ENCODE measurements at regions of chr11 and their contacts with region 1.

Region 1: DNA sequence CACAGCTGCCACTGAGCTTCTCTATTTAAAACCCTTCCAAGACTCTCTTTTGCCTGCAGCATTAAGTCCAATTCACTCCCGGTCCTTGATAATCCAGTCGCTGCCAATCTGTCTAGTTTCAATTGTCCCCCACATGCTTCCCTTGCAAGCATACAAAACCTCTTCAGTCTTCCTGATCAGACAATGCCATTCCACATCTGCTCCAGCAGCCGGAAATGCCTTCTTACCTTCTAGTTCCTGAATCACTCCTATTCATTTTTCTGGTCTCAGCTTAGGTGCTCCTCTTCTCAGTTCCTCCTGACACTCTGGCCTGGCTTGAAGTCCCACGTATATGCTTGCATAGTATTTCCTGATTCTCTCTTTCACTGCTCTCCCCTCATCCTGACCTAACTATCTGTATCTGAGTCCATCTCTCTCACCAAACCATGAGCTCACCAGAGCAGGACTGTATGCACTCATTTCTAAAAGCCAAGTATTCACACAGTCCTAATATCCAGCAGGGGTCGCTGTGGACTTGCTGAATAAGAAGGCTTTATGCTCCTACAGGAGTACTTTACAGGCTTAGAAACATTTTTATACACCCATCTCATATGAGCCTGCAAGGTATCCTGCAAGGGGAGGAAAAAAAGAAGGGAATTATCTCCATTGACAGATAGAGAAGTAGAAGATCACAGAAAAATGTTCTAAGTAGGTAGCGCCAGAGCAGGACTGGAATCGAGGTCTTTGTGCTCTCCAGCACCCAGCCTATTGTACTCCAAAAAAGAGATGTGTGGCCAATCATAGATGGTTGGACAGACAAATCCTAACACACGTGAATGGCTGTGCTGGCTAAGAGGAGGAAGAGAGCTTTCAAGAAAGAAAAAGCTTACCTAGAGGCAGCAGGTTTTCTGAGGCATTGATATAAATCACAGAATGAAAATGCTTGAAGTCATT is 19.2 kb downstream of the XRRA1 start:
- DNase-seq: peak; percentile 80
- ATAC-seq: peak; percentile 74
- H3K4me3 Mint-ChIP-seq: no peak overlapping the region
- H3K27ac Mint-ChIP-seq: no peak overlapping the region
- H3K4me1 Mint-ChIP-seq: peaks cover 11% of the 10 kb centered on the region
- H3K27me3 Mint-ChIP-seq: no peaks in the 10 kb centered on the region

Region 2: DNA sequence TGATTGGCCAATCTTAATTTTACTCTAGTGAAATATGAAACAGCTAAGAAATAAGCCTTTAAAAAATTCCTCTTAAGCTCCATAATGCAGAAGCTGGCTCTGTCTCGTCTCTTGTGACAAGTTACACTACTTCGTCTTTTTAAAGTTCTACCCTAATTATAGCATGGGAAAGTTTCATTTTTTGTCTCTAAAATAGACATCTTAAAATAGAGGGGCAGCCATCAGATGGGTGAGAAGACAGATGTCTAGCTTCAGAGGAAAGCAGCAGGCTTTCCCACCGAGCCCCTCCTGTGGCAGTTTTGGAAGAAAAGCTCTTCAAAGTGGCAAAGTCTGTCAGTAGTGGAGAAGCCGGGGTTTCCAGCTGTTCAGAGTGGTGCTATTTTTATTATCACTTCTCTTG is 20.3 kb before region 1 on chr11:
- CTCF ChIA-PET with region 1: interaction called, 11 read pairs
- POLR2A ChIA-PET with region 1: no interaction called
- intact Hi-C with region 1: no loop called
- DNase-seq: no peak
- ATAC-seq: no peak
- H3K4me3 Mint-ChIP-seq: no peak overlapping the region
- H3K27ac Mint-ChIP-seq: no peak overlapping the region
- H3K4me1 Mint-ChIP-seq: no peaks in the 10 kb centered on the region
- H3K27me3 Mint-ChIP-seq: no peaks in the 10 kb centered on the region

Region 3: GRCh38 chr11:74988541-74989260 is 59.0 kb after region 1 on chr11 and contains the start of gene NEU3:
- CTCF ChIA-PET with region 1: interaction called, 5 read pairs
- POLR2A ChIA-PET with region 1: no interaction called
- intact Hi-C with region 1: loop called in 1 of 2 experiments (anchors 1 kb)
- DNase-seq: peak; percentile 91
- ATAC-seq: peak; percentile 97
- H3K4me3 Mint-ChIP-seq: peak within 1 kb of the TSS; percentile 85
- H3K27ac Mint-ChIP-seq: peak within 1 kb of the TSS; percentile 77
- H3K4me1 Mint-ChIP-seq: peaks cover 31% of the 10 kb centered on the region
- H3K27me3 Mint-ChIP-seq: no peaks in the 10 kb centered on the region
- total RNA-seq, gene NEU3: 12.0 to 13.9 TPM

Region 4: DNA sequence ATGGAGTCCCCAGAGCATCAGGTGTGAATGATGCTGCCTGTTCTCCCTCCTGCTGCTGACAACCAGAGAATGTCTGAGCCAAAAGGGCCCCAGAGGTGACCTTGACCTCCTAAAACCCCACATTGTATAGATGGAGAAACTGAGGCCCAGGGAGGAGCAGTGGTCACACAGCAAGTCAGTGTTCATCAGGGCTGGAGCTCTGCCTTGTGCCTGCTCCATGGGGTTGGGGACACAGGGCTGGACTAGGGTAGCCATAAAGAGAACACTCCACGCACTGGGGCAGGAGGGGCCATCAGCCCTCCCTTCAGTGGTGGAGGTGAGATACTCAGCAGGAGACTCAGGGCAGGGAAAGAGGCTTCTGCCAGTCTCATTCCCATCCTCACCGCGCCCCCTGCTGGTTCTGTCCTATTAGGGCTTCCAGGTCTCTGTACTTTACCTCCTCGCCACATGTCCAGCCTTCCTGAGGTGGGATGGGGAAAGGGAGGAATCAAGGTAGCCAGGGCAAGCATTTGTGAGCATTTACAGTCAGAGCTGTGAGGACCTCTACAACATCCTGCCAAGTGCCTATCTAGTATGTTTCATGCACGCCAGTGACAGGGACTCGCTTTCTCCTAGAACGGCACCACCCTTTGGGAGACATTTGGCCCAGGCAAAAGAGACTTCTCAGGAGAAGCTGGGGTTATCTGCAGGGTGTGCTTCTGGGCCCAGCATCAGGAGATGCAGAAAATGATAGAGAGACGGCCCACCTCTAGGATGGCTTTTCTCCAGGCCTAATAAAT is 102.3 kb after region 1 on chr11:
- CTCF ChIA-PET with region 1: interaction called, 5 read pairs
- POLR2A ChIA-PET with region 1: no interaction called
- intact Hi-C with region 1: loop called (anchors 1 kb)
- DNase-seq: peak; percentile 84
- ATAC-seq: peak; percentile 75
- H3K4me3 Mint-ChIP-seq: no peak overlapping the region
- H3K27ac Mint-ChIP-seq: no peak overlapping the region
- H3K4me1 Mint-ChIP-seq: no peaks in the 10 kb centered on the region
- H3K27me3 Mint-ChIP-seq: no peaks in the 10 kb centered on the region

Region 5: DNA sequence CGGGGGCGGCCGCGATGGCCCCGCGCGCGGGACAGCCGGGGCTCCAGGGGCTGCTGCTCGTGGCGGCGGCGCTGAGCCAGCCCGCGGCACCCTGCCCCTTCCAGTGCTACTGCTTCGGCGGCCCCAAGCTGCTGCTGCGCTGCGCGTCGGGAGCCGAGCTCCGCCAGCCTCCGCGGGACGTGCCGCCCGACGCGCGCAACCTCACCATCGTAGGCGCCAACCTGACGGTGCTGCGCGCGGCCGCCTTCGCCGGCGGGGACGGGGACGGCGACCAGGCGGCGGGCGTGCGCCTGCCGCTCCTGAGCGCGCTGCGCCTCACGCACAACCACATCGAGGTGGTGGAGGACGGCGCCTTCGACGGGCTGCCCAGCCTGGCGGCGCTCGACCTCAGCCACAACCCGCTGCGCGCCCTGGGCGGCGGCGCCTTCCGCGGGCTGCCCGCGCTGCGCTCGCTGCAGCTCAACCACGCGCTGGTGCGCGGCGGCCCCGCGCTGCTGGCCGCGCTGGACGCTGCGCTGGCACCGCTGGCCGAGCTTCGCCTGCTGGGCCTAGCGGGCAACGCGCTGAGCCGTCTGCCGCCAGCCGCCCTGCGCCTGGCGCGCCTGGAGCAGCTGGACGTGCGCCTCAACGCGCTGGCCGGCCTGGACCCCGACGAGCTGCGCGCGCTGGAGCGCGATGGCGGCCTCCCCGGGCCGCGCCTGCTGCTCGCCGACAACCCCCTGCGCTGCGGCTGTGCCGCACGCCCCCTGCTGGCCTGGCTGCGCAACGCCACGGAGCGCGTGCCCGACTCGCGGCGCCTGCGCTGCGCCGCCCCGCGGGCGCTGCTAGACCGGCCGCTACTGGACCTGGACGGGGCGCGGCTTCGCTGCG is 311.6 kb after region 1 on chr11:
- CTCF ChIA-PET with region 1: interaction called, 6 read pairs
- POLR2A ChIA-PET with region 1: no interaction called
- intact Hi-C with region 1: loop called in 1 of 2 experiments (anchors 2 kb)
- DNase-seq: peak; percentile 92
- ATAC-seq: peak; percentile 88
- H3K4me3 Mint-ChIP-seq: peak overlapping the region; percentile 59
- H3K27ac Mint-ChIP-seq: no peak overlapping the region
- H3K4me1 Mint-ChIP-seq: peaks cover 8% of the 10 kb centered on the region
- H3K27me3 Mint-ChIP-seq: peaks cover 23% of the 10 kb centered on the region

Measured in activated CD4-positive, alpha-beta T cell treated with anti-CD3 and anti-CD28 coated beads for 36 hours (primary cell).